ENCODE measurements at regions of chr7 and their contacts with region 1.

Region 1: DNA sequence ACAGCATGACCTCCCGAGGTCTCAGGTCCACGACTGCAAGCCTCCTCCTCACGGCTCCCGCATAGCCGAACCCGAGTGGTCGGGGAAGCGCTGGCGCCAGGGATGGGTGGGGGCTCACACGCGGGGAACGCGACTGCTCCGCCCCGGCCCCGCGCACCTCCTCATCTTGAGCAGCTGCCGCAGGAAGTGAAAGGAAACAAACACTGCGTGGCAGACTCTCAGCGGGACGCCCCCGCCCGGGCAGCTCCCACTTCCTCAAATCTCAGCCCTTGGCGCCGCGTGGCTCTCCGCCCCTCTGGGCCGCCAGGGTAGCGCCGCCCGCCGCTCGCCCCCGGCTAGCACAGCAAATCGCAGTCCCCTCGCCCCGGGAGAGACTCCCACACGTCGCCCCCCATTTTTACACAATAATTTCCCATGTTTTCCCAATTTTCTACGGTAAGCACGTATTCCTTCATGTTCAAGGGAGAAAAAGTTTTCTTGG is at the start of gene TMEM243:
- DNase-seq: peak; percentile 90
- H3K4me3 Mint-ChIP-seq: peak within 1 kb of the TSS; percentile 99
- H3K27ac Mint-ChIP-seq: peak within 1 kb of the TSS; percentile 96
- H3K4me1 Mint-ChIP-seq: peaks cover 32% of the 10 kb centered on the region
- H3K27me3 Mint-ChIP-seq: no peaks in the 10 kb centered on the region
- total RNA-seq, gene TMEM243: 44.7 to 47.8 TPM

Region 2: DNA sequence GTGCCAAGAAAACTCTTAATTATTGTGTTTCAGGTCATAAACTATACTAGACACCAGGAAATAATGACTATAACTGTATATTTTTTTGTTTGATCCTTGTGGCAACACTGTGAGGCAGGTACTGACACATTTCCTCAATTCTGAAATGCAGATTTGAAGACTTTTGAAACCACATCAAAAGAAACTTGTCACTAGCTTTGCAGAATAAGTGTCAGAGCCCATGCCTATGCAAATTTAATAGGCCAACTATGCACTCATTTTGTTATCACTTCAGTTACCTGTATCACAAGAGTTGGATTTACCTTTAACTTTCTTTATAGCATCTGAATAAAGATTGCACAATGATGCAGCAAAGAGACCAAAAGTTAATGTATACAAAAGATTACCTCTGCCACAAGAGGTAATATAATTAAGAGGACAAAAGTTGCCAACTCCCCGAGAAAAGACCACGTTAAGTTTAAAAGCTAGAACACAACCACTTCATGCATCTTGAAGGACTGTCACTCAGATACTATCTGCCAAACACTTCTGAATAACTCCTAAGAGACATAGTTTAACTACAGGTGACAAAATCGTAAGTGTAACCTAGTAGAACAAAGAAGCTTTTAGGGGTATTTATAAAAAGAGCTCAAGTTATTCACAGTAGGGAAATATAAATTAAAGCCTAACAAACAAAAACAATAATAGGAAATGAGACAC is 240.6 kb before region 1 on chr7:
- CTCF ChIA-PET with region 1: no interaction called
- POLR2A ChIA-PET with region 1: no interaction called
- intact Hi-C with region 1: loop called (anchors 1 kb)
- DNase-seq: no peak
- H3K4me3 Mint-ChIP-seq: no peak overlapping the region
- H3K27ac Mint-ChIP-seq: no peak overlapping the region
- H3K4me1 Mint-ChIP-seq: peaks cover 41% of the 10 kb centered on the region
- H3K27me3 Mint-ChIP-seq: no peaks in the 10 kb centered on the region

Region 3: GRCh38 chr7:87021285-87021684 is 198.3 kb before region 1 on chr7:
- CTCF ChIA-PET with region 1: no interaction called
- POLR2A ChIA-PET with region 1: no interaction called
- intact Hi-C with region 1: no loop called
- DNase-seq: no peak
- H3K4me3 Mint-ChIP-seq: no peak overlapping the region
- H3K27ac Mint-ChIP-seq: no peak overlapping the region
- H3K4me1 Mint-ChIP-seq: no peaks in the 10 kb centered on the region
- H3K27me3 Mint-ChIP-seq: no peaks in the 10 kb centered on the region

Region 4: DNA sequence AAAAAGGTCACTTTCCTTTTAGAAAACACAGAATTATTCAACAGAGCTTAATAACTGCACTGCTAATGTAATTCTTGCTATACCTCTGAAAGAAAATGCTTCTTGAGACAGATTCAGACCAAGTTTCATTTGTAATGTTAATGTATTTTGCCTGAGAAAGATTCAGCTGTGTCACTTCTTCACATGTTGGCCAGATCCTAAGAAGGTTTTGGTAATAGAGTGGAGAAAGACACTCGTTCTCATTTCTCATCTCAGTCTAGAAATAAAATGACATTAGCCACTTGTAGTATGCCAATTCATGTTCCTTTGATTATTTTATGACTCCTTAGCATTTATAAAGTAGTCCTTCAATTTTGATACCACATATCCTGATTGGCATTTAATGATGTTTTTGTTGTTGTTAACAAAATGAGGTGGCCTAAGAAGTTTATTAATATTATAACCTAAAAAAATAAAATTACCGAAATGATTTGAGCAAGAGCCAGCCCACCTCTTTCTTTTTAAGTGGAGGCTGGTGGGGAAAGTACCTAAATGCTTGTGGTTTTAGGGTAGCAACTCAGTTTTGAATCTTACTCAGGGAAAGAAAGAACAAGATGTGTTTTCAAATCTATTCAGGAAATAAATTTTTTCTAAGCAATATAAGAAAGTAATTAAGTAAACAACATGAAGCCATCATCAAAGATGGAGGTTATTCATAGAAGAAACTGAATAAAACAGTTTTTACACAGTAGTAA is 143.7 kb before region 1 on chr7:
- CTCF ChIA-PET with region 1: no interaction called
- POLR2A ChIA-PET with region 1: no interaction called
- intact Hi-C with region 1: loop called (anchors 5 kb)
- DNase-seq: no peak
- H3K4me3 Mint-ChIP-seq: no peak overlapping the region
- H3K27ac Mint-ChIP-seq: no peak overlapping the region
- H3K4me1 Mint-ChIP-seq: peaks cover 10% of the 10 kb centered on the region
- H3K27me3 Mint-ChIP-seq: peaks cover 9% of the 10 kb centered on the region

Region 5: GRCh38 chr7:87199700-87200450 is 19.7 kb before region 1 on chr7:
- CTCF ChIA-PET with region 1: interaction called, 8 read pairs
- POLR2A ChIA-PET with region 1: interaction called, 13 read pairs
- intact Hi-C with region 1: loop called (anchors 1 kb)
- DNase-seq: no peak
- H3K4me3 Mint-ChIP-seq: no peak overlapping the region
- H3K27ac Mint-ChIP-seq: peak overlapping the region; percentile 63
- H3K4me1 Mint-ChIP-seq: peaks cover 62% of the 10 kb centered on the region
- H3K27me3 Mint-ChIP-seq: no peaks in the 10 kb centered on the region

Region 6: DNA sequence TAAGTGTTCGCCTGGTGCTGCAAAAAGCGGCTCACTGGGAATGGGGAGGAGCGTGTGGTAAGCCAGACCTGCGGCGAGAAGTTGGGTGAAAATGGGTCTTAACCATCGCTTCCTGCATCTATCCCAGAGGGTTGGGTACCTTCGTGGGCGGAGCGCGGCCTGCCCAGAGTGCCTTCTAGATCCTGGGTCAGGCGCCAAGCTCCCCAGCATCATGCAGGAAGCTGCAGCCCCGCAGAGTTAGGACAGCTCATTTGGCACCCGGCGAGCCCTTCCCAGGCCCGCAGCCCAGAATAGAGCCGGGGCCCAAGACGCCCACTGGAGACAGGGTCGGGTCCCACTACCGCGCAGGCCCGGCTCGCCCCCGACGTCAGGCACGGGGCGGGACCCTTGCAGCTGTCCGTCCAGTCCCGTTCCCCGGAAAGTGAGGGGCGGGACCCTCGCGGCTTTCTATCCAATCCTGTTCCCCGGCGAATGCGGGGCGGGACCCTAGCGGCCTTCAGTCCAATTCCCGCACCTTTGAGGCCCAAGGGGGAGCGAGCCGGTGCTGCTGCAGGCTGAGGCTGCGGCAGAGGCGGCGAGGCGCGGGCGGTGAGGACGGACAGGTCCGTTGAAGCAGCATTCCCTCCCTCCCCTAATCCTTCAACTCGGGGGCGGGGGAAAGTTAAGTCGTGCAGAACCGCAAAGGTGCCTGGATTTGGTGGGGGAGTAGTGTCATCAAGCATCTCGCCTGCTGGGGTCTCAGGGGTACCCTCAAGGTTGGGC is 125.8 kb after region 1 on chr7 and contains the start of gene CROT:
- CTCF ChIA-PET with region 1: no interaction called
- POLR2A ChIA-PET with region 1: interaction called, 3 read pairs
- intact Hi-C with region 1: loop called (anchors 1 kb)
- DNase-seq: peak; percentile 97
- H3K4me3 Mint-ChIP-seq: peak within 1 kb of the TSS; percentile 99
- H3K27ac Mint-ChIP-seq: peak within 1 kb of the TSS; percentile 95
- H3K4me1 Mint-ChIP-seq: peaks cover 28% of the 10 kb centered on the region
- H3K27me3 Mint-ChIP-seq: no peaks in the 10 kb centered on the region
- total RNA-seq, gene CROT: 8.5 to 9.6 TPM

Region 7: GRCh38 chr7:87933945-87934698 is 714.5 kb after region 1 on chr7 and contains the start of gene ADAM22:
- CTCF ChIA-PET with region 1: no interaction called
- POLR2A ChIA-PET with region 1: no interaction called
- intact Hi-C with region 1: loop called (anchors 5 kb)
- DNase-seq: peak; percentile 89
- H3K4me3 Mint-ChIP-seq: peak within 1 kb of the TSS; percentile 81
- H3K27ac Mint-ChIP-seq: no peak within 1 kb of the TSS
- H3K4me1 Mint-ChIP-seq: peaks cover 9% of the 10 kb centered on the region
- H3K27me3 Mint-ChIP-seq: peaks cover 5% of the 10 kb centered on the region
- total RNA-seq, gene ADAM22: 1.8 to 2.2 TPM

Measured in activated CD4-positive, alpha-beta memory T cell treated with anti-CD3 and anti-CD28 coated beads for 36 hours (primary cell).